Activated T-helper 1 cell treated with anti-CD3 and anti-CD28 coated beads, Interleukin-12 subunit alpha, Interleukin-12 subunit beta, Interleukin-2, Interleukin-4 antibody, amounts not matched to agents 30 ng/mL and 10 ng/mL and 1 ng/mL, durations not matched to agents 14 hours and 24 hours and 36 hours (primary cell): ENCODE measurements at regions of chr17 and their contacts with region 1.

Region 1: DNA sequence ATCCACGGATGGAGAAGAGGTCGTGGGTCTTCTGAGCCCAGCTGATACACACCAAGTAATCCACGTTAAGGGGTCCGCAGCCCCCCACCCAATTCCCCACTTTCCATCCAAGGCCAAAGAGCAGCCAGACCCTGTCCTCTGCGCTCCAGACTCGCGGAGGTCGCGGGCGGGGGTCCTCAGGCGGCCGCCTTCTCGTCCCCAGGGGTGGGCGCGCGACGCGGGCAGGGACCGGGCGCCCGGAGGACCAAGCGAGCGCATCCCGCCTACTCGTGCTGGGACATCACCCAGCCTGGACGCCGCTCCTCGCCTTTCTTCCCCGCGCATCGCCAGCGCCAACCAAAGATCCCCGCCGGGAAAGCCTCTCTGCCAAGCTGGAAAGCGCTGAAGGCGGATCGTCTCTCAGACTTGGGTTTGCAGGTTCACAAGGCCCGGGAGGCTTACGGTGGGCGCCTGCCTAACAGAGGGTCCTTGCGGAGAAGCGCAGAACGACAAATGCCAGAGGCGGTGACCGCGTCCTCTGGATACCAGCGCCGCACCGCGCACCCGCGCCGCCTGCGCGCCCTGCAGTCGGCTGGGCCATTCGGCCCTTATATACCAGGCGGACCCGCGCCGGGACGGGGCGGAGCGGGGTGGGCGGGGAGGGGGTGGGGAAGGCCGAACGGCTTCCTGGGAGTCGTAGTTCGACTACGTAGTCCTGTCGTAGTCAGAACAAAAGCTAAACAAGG is 471.6 kb downstream of the SOX9 start:
- DNase-seq: peak; percentile 66
- H3K4me3 Mint-ChIP-seq: peak overlapping the region; percentile 88
- H3K27ac Mint-ChIP-seq: peak overlapping the region; percentile 24
- H3K4me1 Mint-ChIP-seq: peaks cover 37% of the 10 kb centered on the region
- H3K27me3 Mint-ChIP-seq: peaks cover 50% of the 10 kb centered on the region

Region 2: GRCh38 chr17:72539981-72540897 is 52.2 kb before region 1 on chr17:
- intact Hi-C with region 1: no loop called
- DNase-seq: peak; percentile 56
- H3K4me3 Mint-ChIP-seq: no peak overlapping the region
- H3K27ac Mint-ChIP-seq: no peak overlapping the region
- H3K4me1 Mint-ChIP-seq: peaks cover 5% of the 10 kb centered on the region
- H3K27me3 Mint-ChIP-seq: peaks cover 13% of the 10 kb centered on the region

Region 3: DNA sequence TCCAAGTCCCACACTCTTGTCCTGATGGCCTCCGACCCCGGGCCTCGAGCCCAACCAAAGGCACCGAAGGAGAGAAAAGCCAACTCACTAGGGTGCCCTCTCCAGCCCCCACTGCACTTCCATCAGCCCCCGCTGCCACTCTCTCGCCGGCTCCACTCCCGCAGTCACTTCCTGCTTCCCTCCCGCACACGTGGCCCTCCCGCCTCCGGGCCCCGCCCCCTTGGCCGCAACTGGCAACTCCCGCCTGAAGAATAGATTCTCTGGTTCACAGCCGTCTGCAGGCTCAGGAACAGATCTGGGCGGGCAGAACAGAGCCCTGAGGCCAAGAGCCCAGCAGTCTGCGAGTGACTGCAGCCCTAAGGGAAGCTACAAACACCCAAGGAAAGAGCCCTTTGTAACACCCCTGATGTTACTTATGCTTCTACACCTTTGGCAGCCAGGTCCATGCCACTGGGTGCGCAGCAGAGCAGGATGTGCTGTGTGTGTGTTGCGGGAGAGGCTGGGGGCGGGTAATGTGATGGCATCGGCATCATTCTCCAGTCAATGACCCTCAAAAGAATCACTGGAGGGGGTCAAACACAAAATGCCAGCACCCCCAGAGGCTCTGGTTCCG is 500.2 kb after region 1 on chr17 and contains the start of gene SLC39A11:
- intact Hi-C with region 1: loop called (anchors 5 kb)
- DNase-seq: peak; percentile 89
- H3K4me3 Mint-ChIP-seq: peak within 1 kb of the TSS; percentile 100
- H3K27ac Mint-ChIP-seq: peak within 1 kb of the TSS; percentile 98
- H3K4me1 Mint-ChIP-seq: peaks cover 22% of the 10 kb centered on the region
- H3K27me3 Mint-ChIP-seq: peaks cover 6% of the 10 kb centered on the region
- total RNA-seq, gene SLC39A11: 20.9 and 25.7 TPM in 2 replicates